Breast epithelium (tissue), 4 donors: ENCODE measurements at regions of chr14 and their contacts with region 1.

Region 1: GRCh38 chr14:61973868-61974321 is 211.7 kb downstream of the SNAPC1 start:
- DNase-seq: no peak
- H3K4me3 ChIP-seq: no peak overlapping the region
- H3K27ac ChIP-seq: no peak overlapping the region
- H3K4me1 ChIP-seq: no peaks in the 10 kb centered on the region
- H3K27me3 ChIP-seq: no peaks in the 10 kb centered on the region
- CTCF ChIP-seq: no peak
- POLR2A ChIP-seq: no peak

Region 2: DNA sequence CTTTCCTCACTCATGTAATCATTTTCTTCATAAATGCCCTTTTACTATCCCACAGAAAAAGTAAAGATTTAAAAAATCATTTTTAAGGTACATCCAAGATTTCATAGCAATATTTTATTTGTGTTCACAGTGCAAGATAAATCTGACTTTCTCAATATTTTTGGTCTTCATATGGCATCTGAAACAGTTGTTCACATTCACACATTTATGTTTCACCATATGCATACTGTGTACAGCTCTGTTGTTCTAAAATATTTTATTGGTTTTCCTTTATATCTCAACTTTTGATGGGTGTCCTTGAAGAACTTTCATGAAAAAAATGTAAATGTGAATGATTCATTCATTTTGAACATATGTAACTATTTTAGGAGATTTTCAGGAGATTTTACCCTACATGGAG is 137.0 kb after region 1 on chr14:
- intact Hi-C with region 1: loop called (anchors 5 kb)
- DNase-seq: no peak
- H3K4me3 ChIP-seq: no peak overlapping the region
- H3K27ac ChIP-seq: no peak overlapping the region
- H3K4me1 ChIP-seq: no peaks in the 10 kb centered on the region
- H3K27me3 ChIP-seq: peaks cover 0 to 13% of the 10 kb centered on the region in 2 donors
- CTCF ChIP-seq: no peak
- POLR2A ChIP-seq: no peak

Region 3: GRCh38 chr14:62369919-62370560 is 396.1 kb after region 1 on chr14:
- intact Hi-C with region 1: no loop called
- DNase-seq: no peak
- H3K4me3 ChIP-seq: no peak overlapping the region
- H3K27ac ChIP-seq: no peak overlapping the region
- H3K4me1 ChIP-seq: no peaks in the 10 kb centered on the region
- H3K27me3 ChIP-seq: no peaks in the 10 kb centered on the region
- CTCF ChIP-seq: no peak
- POLR2A ChIP-seq: no peak